Activated naive CD8-positive, alpha-beta T cell treated with anti-CD3 and anti-CD28 coated beads, Interleukin-2, amount 10 ng/mL, durations not matched to agents 7 days and 5 days (primary cell): ENCODE measurements at regions of chr5 and their contacts with region 1.

Region 1: DNA sequence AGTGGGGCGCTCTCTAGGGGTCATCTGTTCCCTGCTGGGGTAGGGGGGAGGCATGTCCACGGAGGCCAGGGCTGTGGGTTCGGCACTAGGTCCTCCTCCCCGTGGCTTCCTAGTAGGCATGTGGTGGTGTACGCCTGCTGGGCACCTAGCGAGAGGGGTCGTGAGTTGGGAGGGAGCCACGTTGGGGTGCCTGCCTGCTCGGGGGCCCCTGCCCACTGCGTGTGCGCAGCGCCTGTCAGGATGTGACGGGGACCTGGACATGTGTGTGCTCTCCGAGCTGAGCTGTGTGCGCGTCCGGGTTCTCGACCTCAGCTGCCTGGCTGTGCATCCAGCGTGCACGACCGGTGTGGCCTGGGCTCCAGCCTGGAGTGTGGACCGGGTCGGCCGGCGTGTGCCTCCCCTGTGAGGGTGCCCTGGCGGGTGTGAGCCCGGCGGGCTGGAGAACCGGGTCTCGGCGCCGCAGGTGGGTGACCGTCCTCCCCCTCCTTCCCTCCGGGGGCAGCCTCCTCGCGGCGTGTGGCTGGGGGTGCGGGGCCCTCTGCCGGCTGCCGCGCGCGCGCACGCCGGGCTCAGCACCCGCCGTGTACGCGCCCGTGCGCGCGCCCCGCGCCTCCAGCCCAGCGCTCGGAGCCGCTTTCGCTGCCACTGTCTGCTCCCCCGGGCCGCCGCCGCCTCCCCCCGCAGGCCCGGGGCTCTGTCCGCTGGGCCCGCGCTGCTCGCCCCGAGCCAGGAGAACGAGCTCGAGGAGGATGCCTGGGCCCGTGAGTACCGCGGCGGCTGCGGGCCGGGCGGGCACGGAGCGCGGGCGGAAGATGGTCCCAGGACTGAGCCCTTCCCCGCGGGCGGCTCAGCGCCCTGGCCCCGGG is at the start of gene PRR7:
- DNase-seq: peak; percentile 89
- ATAC-seq: peak; percentile 76
- H3K4me3 Mint-ChIP-seq: peak within 1 kb of the TSS; percentile 80
- H3K27ac Mint-ChIP-seq: peak within 1 kb of the TSS; percentile 87
- H3K4me1 Mint-ChIP-seq: peaks cover 30% of the 10 kb centered on the region
- H3K27me3 Mint-ChIP-seq: no peaks in the 10 kb centered on the region
- total RNA-seq, gene PRR7: 10.0 to 10.6 TPM

Region 2: DNA sequence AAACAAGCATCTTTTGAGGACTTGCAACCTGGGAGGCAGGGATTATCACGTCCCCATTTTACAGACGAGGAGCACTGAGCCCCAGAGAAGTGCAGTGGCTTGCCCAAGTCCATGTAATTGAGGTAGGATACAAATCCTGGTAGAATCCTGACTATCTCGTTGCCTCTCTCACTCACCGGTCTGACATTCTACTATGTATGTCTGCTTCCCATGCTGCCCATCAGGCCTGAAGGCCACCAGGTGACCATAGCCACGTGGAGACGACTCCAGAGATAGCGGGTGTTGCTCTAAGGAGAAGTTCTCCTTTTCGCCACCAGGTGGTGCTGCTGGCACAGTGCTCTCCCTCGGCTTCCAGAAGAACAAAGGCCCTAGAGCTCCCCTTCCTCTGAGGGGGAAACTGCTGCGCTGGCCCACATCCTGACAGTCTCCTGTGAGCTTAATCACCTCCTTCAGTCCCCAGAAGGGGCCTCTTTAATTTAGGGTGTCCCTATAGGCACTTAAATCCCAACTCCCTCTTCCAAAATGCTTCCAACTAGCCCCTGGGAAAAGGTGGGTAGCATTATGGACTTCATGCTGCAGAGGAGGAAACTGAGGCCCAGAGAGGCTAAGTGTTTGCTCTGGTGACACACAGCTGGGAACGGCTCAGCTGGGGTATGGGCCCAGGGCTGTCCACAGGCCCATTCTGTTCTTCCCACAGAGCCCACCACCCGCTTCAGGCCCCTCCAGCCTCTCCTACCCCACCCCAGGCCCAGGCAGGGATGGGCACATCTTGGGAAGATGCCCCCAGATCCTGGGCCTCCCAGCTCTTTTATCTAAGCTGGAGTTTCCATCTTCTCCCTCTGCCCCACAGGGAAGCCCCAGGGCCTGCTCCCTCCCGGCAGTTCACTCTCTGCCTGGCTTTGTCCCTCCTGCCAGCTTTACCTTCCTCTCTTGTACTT is 55.8 kb before region 1 on chr5:
- POLR2A ChIA-PET with region 1: interaction called, 18 read pairs
- DNase-seq: peak; percentile 83
- ATAC-seq: peak; percentile 88
- H3K4me3 Mint-ChIP-seq: peak overlapping the region; percentile 56
- H3K27ac Mint-ChIP-seq: peak overlapping the region; percentile 88
- H3K4me1 Mint-ChIP-seq: peaks cover 36% of the 10 kb centered on the region
- H3K27me3 Mint-ChIP-seq: peaks cover 3% of the 10 kb centered on the region